Dorsolateral prefrontal cortex (tissue), 120 donors: ENCODE measurements at regions of chr3 and their contacts with region 1.

Region 1: GRCh38 chr3:20039766-20040475 is at the start of gene KAT2B:
- DNase-seq: peak; percentile 34 to 89 (median 77)
- H3K4me3 ChIP-seq: peak within 1 kb of the TSS; percentile 61 to 95 (median 83)
- H3K27ac ChIP-seq: peak within 1 kb of the TSS; percentile 86 to 100 (median 98)
- H3K27me3 ChIP-seq: no peaks in the 10 kb centered on the region
- CTCF ChIP-seq: peak; percentile 26 to 85 (median 69)
- total RNA-seq, gene KAT2B: 45.8 to 193 (median 92.8) TPM

Region 2: DNA sequence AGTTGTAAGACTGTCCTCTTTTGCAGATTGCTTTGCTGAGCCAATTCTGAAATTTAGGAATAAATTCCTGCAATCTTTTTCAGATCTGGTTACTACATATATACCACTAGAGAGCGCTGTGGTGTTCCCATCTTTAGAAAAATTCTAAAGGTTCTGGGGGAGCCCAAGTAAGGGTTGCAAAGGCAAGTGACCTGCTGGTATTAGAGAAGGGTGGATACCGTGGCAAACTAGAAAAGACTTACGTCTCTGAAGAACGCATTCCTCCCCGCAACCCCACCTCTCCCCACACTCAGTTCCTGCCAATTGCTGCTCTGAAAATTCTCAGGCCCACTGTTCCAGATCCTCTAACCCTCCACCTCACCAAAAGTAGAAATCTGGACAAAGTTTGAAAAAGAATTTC is 154.5 kb before region 1 on chr3:
- intact Hi-C with region 1: loop called (anchors 5 to 10 kb)
- DNase-seq: no peak
- H3K4me3 ChIP-seq: no peak overlapping the region
- H3K27ac ChIP-seq: no peak overlapping the region
- H3K27me3 ChIP-seq: no peaks in the 10 kb centered on the region
- CTCF ChIP-seq: peak; percentile 25 to 79 (median 60)

Region 3: DNA sequence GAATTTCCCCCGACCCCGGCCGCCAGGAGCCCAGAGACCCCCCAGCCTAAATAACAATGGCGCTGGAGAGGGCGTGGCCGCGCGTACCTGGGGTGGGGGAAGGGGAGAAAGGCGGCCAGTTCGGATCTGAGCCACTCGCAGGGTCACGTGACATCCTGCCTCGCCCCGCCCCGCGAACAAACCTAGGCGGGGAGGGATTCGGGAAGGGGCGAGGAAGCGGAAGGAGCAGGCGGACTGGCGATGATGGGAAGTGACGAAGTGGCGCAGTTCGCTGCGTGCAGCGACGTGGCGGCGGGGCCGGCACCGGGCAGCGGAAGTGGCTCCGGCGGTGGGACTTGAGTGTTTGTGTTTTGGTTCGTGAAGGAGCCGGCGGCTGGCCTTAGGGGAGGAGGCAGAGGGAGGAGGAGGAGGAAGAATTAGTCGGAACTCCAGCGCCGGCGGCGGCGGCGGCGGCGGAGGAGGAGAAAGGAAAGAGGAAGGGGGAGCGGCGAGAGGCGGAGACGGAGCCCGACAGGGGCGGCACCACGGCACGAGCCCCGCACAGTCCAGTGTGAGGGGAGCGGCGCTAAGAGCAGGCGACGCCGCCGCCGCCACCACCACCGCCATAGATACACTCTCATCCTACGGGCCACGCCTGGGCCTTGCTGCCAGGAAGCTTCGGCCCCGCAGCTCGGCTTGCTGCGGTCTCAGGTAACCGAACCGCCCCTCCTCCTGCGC is 92.9 kb before region 1 on chr3 and contains the start of gene RAB5A:
- intact Hi-C with region 1: loop called (anchors 2 to 5 kb)
- DNase-seq: peak; percentile 91 to 97 (median 95)
- H3K4me3 ChIP-seq: peak within 1 kb of the TSS; percentile 61 to 100 (median 95)
- H3K27ac ChIP-seq: peak within 1 kb of the TSS; percentile 66 to 99 (median 93)
- H3K27me3 ChIP-seq: no peaks in the 10 kb centered on the region
- CTCF ChIP-seq: peak in 27 of 56 donors; percentile 3 to 49 (median 20)
- total RNA-seq, gene RAB5A: 49.8 to 119 (median 94.4) TPM

Region 4: DNA sequence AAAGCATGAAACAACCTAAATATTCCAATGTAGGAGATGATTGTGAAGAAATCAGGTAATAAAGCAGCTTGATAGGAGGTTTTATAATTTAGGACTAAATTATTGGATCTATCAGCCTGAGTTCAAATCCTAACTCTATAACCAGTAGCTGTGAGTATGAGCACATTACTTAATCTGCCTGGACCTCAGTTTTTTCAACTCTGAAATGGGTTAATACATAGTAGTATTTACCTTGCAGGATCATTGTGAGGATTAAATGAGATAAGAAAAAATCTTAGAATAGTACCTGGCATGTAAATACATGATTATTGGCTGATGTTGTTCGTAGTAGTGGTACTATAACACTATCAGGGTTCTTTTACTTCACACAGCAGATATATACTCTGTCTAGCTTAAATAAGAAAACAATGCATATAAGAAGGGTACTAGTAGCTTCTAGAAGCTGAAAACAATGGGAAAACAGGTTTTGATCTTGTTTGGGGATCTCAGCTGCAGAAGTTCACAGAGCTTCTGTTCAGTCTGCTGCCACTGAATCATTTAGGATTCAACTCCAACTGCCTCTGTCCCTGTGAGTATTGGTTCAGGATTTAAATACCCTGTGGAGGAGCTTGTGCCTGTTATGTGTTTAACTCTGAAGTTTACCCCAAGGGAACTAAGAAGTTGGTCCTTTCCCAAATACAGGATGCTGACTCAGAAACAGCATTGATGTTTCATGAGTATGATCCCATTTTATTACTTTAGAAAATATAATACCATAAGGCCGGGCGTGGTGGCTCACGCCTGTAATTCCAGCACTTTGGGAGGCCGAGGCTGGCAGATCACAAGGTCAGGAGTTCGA is 34.5 kb after region 1 on chr3:
- intact Hi-C with region 1: loop called (anchors 5 kb)
- DNase-seq: no peak
- H3K4me3 ChIP-seq: peak overlapping the region in 3 of 59 donors; percentile 13 to 30 (median 13)
- H3K27ac ChIP-seq: peak overlapping the region; percentile 15 to 96 (median 84)
- H3K27me3 ChIP-seq: no peaks in the 10 kb centered on the region
- CTCF ChIP-seq: no peak

Region 5: DNA sequence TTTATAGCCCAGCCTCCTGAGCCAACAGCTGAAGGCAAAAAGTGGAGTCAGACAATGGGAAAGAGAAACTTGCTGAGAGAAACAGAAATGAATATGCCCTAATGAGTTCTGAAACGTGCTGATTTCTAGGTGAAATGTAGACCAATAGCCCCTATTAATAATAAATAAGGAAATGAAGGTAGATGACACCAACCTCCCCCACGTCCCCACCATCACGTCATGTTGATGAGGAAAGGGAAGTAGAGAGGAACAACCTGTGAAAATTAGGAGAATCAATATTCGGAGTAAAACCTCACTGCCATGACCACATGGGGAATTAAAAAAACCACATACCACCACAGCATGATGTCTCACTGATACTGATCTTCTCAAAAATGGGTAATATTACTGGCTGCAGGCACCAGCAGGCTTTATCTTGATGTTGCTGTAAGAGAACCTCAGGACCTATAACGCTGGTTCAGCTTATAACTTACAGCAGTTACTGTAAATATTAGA is 64.3 kb after region 1 on chr3:
- intact Hi-C with region 1: loop called (anchors 10 kb)
- DNase-seq: no peak
- H3K4me3 ChIP-seq: peak overlapping the region in 2 of 59 donors; percentile 6 to 30
- H3K27ac ChIP-seq: peak overlapping the region in 31 of 59 donors; percentile 1 to 95 (median 29)
- H3K27me3 ChIP-seq: no peaks in the 10 kb centered on the region
- CTCF ChIP-seq: no peak

Region 6: GRCh38 chr3:20141851-20142250 is 101.9 kb after region 1 on chr3:
- intact Hi-C with region 1: loop called (anchors 1 to 5 kb)
- DNase-seq: peak; percentile 27 to 80 (median 68)
- H3K4me3 ChIP-seq: peak overlapping the region in 14 of 59 donors; percentile 1 to 43 (median 19)
- H3K27ac ChIP-seq: peak overlapping the region in 55 of 59 donors; percentile 4 to 86 (median 63)
- H3K27me3 ChIP-seq: no peaks in the 10 kb centered on the region
- CTCF ChIP-seq: peak in 1 of 56 donors; percentile 11

Region 7: GRCh38 chr3:20185701-20186598 is 146.0 kb after region 1 on chr3 and contains the start of gene SGO1:
- intact Hi-C with region 1: loop called (anchors 1 kb)
- DNase-seq: peak; percentile 99
- H3K4me3 ChIP-seq: peak within 1 kb of the TSS; percentile 55 to 98 (median 77)
- H3K27ac ChIP-seq: peak within 1 kb of the TSS; percentile 58 to 97 (median 90)
- H3K27me3 ChIP-seq: no peaks in the 10 kb centered on the region
- CTCF ChIP-seq: peak in 36 of 56 donors; percentile 3 to 56 (median 26)
- total RNA-seq, gene SGO1: 0.19 to 0.95 (median 0.43) TPM in 15 of 120 experiments, not detected in the others